Activated CD4-positive, alpha-beta T cell treated with anti-CD3 and anti-CD28 coated beads, Interleukin-2, amount 10 ng/mL, durations not matched to agents 7 days and 5 days (primary cell): ENCODE measurements at regions of chr17 and their contacts with region 1.

Region 1: GRCh38 chr17:65312718-65313374 is 175.7 kb downstream of the RGS9 start:
- DNase-seq: no peak
- H3K4me3 Mint-ChIP-seq: no peak overlapping the region
- H3K27ac Mint-ChIP-seq: no peak overlapping the region
- H3K4me1 Mint-ChIP-seq: peaks cover 11% of the 10 kb centered on the region
- H3K27me3 Mint-ChIP-seq: peaks cover 33% of the 10 kb centered on the region

Region 2: DNA sequence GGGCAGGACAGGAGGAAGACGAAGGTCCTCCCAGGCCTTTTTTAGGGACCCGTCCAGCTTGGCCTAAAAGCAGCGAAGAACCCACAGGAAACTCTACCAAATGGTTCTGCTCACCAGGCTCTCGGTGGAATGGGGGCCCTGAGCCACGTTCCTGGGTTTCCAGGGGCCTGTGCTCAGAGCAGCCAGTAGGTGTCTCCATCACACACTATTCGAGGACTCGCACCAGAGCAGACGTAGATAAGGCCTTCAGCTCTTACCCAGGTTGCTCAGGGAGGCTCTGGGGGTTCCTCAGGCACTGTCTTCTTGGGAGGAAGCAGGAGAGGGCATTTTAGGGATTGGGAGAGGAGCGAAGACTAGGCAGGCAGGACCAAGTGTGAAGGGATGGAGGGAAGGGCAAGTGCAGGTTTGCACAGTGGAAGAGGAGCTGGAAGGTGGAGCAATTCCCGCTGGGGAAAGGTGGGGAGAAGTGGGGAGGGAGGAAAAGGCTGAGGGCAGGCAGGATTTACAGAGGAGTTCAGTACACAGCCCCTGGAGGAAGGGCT is 18.6 kb before region 1 on chr17:
- CTCF ChIA-PET with region 1: interaction called, 10 read pairs
- POLR2A ChIA-PET with region 1: no interaction called
- DNase-seq: peak; percentile 63
- H3K4me3 Mint-ChIP-seq: no peak overlapping the region
- H3K27ac Mint-ChIP-seq: peak overlapping the region; percentile 51
- H3K4me1 Mint-ChIP-seq: peaks cover 4% of the 10 kb centered on the region
- H3K27me3 Mint-ChIP-seq: peaks cover 5% of the 10 kb centered on the region

Region 3: DNA sequence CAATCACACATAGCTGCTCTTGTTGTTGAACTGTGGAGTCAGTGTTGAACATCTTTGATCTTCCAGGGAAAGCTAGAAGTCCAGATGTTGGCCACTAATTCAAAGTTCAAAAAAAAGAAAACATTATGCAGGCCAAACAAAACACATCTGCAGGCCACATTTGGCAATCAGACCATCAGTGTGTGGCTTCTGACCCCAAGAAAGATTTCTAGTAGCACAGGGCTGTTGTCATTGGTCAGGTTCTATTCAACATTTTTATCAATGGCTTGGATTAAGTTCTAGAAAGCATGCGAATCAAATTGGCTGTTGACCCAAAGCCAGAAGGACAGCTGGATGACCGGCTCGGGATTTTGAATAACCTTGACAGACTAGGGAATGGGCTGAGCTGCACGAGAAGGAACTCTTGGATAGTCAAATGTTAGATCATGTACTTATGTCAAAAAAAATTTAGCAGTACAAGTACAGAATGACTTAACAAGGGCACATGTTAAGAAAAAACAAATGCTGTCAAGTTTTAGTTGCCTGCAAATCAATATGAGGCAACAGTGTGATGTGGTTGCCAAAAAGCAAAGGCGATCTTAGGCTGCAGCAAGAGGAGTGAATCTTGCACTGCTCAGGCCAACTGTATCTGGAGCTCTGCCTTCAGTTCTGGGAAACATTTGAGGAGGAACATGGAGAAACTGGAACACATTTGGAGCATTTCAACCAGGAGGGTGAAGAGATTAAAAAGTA is 11.9 kb after region 1 on chr17:
- CTCF ChIA-PET with region 1: no interaction called
- POLR2A ChIA-PET with region 1: no interaction called
- DNase-seq: no peak
- H3K4me3 Mint-ChIP-seq: no peak overlapping the region
- H3K27ac Mint-ChIP-seq: no peak overlapping the region
- H3K4me1 Mint-ChIP-seq: peaks cover 2% of the 10 kb centered on the region
- H3K27me3 Mint-ChIP-seq: no peaks in the 10 kb centered on the region